ENCODE measurements at regions of chr20 and their contacts with region 1.

Region 1: DNA sequence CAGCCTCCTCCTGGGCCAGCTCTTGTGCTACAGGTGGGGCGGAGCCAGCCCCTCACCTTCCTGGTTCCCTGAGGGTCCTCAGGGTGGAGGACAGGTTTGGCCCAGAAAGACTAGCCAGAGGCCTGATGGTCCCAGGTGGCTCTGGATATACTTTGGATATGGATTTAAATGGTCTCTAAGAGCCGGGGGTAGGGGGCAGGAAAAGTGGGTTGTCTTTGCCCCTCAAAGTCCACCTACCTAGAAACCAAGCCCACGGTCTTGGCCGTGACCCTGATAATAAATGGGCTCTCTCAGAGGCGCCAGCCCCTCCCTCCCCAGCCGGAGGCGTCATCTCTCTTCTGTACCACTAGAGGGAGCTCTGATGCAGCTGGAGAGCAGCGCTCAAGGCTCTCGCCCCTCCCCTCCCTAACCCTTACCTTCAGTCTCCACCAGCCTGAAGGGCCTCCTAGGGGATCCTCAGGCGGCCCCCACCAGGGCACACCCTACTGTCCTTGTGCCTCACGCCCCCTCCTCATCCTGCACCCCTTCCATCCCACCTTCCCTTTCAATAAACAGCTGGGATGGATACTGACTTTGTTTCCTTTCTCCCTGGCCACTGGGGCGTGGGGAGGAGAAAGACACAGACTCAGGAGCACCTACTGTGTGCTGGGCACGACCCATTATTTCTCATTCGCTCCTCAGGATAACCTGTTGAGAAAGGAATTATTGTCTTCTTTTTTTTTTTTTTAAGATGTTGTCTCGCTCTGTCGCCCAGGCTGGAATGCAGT is 7.6 kb downstream of the NRSN2 start:
- DNase-seq: peak; percentile 60 to 72
- ATAC-seq: peak; percentile 84 to 96 (median 94)
- H3K4me3 ChIP-seq: no peak overlapping the region
- H3K27ac ChIP-seq: no peak overlapping the region
- H3K4me1 ChIP-seq: peaks cover 0 to 8% (median 3%) of the 10 kb centered on the region in 9 donors
- H3K27me3 ChIP-seq: no peaks in the 10 kb centered on the region
- CTCF ChIP-seq: peak; percentile 94 to 99 (median 97)

Region 2: GRCh38 chr20:330233-331149 is 24.0 kb before region 1 on chr20:
- intact Hi-C with region 1: loop called in 1 of 10 experiments (anchors 1 kb)
- DNase-seq: peak in 1 of 2 donors; percentile 59
- ATAC-seq: peak in 4 of 8 donors; percentile 12 to 27 (median 22)
- H3K4me3 ChIP-seq: no peak overlapping the region
- H3K27ac ChIP-seq: peak overlapping the region in 2 of 10 donors; percentile 13 to 14
- H3K4me1 ChIP-seq: peaks cover 3 to 43% (median 21%) of the 10 kb centered on the region in 9 donors
- H3K27me3 ChIP-seq: peaks cover 0 to 9% (median 0%) of the 10 kb centered on the region in 7 donors
- CTCF ChIP-seq: peak; percentile 66 to 90 (median 86)

Region 3: DNA sequence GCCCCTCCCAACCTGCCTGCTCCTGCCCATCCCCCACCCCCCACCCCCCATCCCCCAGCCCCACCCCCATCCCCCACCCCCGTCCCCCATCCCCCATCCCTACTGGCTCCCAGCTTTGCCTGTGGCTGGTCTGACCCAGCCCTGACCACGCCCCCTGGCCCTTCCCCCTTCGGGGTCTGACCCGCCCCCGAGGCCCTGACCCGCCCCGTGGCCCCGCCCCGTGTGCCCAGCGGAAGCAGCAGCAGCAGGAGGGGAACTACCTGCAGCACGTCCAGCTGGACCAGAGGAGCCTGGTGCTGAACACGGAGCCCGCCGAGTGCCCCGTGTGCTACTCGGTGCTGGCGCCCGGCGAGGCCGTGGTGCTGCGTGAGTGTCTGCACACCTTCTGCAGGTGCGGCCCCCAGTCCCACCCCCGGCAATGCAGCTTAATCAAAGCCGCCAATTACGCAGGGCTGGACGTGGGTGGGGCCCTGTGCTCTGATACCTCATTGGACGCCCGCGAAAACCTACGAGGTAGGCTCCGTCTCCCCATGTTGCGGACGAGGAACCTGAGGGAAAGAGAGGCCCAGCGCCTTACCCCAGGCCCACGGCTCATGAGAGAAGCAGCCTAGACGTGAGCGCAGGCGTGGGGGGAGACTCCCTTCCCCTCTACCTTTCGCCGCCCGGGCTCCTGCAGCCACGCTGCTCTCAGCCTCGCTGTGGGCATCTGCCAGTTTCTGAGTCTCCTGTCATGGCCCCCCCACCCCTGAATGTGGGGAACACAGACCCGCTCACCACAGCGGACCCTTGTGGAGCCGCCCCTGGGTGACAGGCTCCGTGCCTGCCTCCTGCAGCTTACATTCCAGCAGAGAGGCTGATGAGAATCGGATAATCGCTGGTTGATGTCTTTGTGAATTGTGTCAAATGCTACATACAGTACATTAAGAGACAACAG is 66.4 kb after region 1 on chr20:
- intact Hi-C with region 1: loop called in 2 of 10 experiments (anchors 10 kb)
- DNase-seq: no peak
- ATAC-seq: peak in 1 of 8 donors; percentile 20
- H3K4me3 ChIP-seq: no peak overlapping the region
- H3K27ac ChIP-seq: no peak overlapping the region
- H3K4me1 ChIP-seq: peaks cover 0 to 4% (median 0%) of the 10 kb centered on the region in 9 donors
- H3K27me3 ChIP-seq: no peaks in the 10 kb centered on the region
- CTCF ChIP-seq: no peak

Region 4: GRCh38 chr20:478949-479429 is 124.5 kb after region 1 on chr20:
- intact Hi-C with region 1: loop called (anchors 1 to 5 kb)
- DNase-seq: peak in 1 of 2 donors; percentile 24
- ATAC-seq: peak in 6 of 8 donors; percentile 15 to 56 (median 42)
- H3K4me3 ChIP-seq: no peak overlapping the region
- H3K27ac ChIP-seq: no peak overlapping the region
- H3K4me1 ChIP-seq: peaks cover 0 to 20% (median 8%) of the 10 kb centered on the region in 9 donors
- H3K27me3 ChIP-seq: no peaks in the 10 kb centered on the region
- CTCF ChIP-seq: peak; percentile 43 to 76 (median 67)

Region 5: GRCh38 chr20:539848-540247 is 185.4 kb after region 1 on chr20:
- intact Hi-C with region 1: no loop called
- DNase-seq: no peak
- ATAC-seq: no peak
- H3K4me3 ChIP-seq: no peak overlapping the region
- H3K27ac ChIP-seq: peak overlapping the region in 4 of 10 donors; percentile 1 to 15 (median 12)
- H3K4me1 ChIP-seq: peaks cover 17 to 87% (median 72%) of the 10 kb centered on the region in 9 donors
- H3K27me3 ChIP-seq: no peaks in the 10 kb centered on the region
- CTCF ChIP-seq: no peak

Region 6: GRCh38 chr20:653110-653589 is 298.7 kb after region 1 on chr20 and contains the start of gene SRXN1:
- intact Hi-C with region 1: loop called in 7 of 10 experiments (anchors 5 to 10 kb)
- DNase-seq: peak; percentile 91 to 93
- ATAC-seq: peak; percentile 92 to 96 (median 96)
- H3K4me3 ChIP-seq: peak within 1 kb of the TSS; percentile 36 to 87 (median 76)
- H3K27ac ChIP-seq: peak within 1 kb of the TSS; percentile 86 to 98 (median 93)
- H3K4me1 ChIP-seq: peaks cover 6 to 48% (median 22%) of the 10 kb centered on the region in 9 donors
- H3K27me3 ChIP-seq: no peaks in the 10 kb centered on the region
- CTCF ChIP-seq: peak; percentile 39 to 79 (median 70)
- total RNA-seq, gene SRXN1: 21.4 to 42.0 (median 30.9) TPM

Region 7: GRCh38 chr20:728248-728944 is 373.9 kb after region 1 on chr20:
- intact Hi-C with region 1: loop called in 3 of 10 experiments (anchors 5 to 10 kb)
- DNase-seq: peak; percentile 50 to 66
- ATAC-seq: peak; percentile 75 to 88 (median 84)
- H3K4me3 ChIP-seq: peak overlapping the region; percentile 38 to 70 (median 58)
- H3K27ac ChIP-seq: peak overlapping the region in 1 of 10 donors; percentile 36
- H3K4me1 ChIP-seq: peaks cover 0 to 16% (median 8%) of the 10 kb centered on the region in 9 donors
- H3K27me3 ChIP-seq: peaks cover 0 to 63% (median 35%) of the 10 kb centered on the region in 7 donors
- CTCF ChIP-seq: peak; percentile 43 to 78 (median 71)